Left ventricle myocardium superior (tissue), 1 donor: ENCODE measurements at regions of chr3 and their contacts with region 1.

Region 1: GRCh38 chr3:9384141-9384853 is 13.1 kb upstream of the SETD5 start:
- DNase-seq: no peak
- ATAC-seq: no peak

Region 2: DNA sequence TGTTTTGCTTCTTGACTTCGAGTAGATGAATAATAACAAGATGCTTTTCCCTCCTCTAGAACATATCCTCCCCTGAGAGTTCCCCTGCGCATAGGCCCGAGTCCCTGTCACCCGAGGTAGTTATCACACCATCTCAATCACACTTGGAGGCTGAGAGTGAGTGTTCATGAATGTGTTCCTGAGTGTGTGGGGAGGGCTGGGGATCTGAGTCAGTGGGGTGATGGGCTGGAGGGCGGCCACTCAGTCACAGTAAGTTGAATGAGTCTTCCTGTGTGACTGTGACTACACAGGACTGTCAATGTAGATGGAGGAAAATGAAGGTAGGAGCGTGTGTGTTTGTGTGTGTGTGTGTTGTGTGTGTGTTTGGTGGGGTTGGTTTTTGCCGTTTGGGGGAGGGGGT is 84.2 kb after region 1 on chr3:
- intact Hi-C with region 1: loop called (anchors 10 kb)
- DNase-seq: no peak
- ATAC-seq: no peak